ENCODE measurements at regions of chr1 and their contacts with region 1.

Region 1: DNA sequence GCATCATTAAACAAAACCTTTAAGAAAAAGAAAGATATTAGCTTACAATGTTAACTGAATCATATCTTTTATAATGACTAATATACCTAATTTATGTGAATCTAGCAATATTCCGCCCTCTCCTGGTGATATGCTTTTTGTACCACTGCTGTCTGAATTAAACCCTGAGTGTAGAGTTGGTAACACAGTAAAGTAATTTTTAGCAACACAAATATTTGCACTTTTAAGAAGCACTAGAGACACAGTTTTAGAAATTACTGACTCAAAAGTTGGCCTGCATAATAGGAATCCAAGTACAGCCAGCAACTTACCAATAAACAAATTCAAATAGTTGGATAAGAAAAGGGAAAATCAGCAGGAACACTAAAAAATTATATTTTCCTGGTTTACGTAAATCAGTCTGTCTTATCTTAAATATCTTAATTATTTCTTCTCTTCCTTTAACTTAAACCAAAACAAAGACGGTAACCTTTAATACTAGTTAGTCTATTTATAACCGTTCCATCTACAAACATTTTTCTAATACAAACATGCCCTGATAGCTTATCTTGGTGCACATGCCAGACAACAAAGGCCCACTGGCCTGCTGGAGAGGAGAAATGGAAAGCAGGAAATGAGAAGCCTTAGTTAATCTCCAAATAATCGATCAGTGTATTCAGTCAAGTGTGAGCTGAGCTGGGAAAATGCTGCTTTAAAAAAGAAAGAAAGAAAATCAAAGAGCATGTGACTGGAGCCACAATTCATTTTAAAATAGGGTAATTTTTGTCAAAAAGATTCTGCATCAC is 246.0 kb downstream of the RERE start:
- DNase-seq: peak in 1 of 5 donors; percentile 48
- H3K4me3 ChIP-seq: no peak overlapping the region
- H3K27ac ChIP-seq: peak overlapping the region in 1 of 2 donors; percentile 52
- H3K4me1 ChIP-seq: peaks cover 10% of the 10 kb centered on the region
- H3K27me3 ChIP-seq: no peaks in the 10 kb centered on the region
- CTCF ChIP-seq: peak; percentile 38 to 73 (median 71)
- EP300 ChIP-seq: no peak
- POLR2A ChIP-seq: no peak

Region 2: DNA sequence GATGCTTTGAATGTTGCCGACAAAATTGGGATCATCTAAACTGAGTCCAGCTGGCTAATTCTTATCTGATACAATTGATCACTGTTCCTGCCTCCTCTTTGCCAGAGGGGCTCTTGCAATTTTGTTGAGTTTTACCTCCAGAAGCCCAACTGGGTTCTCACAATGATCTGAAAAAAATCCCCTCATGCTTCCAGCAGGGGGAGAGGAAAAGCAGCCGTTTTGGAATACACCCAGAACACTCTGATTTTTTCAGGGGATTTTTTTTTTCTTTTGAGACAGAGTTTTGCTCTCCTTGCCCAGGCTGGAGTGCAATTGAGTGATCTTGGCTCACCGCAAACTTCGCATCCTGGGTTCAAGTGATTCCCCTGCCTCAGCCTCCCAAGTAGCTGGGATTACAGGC is 259.9 kb after region 1 on chr1:
- intact Hi-C with region 1: loop called in 1 of 4 experiments (anchors 10 kb)
- DNase-seq: no peak
- H3K4me3 ChIP-seq: no peak overlapping the region
- H3K27ac ChIP-seq: no peak overlapping the region
- H3K4me1 ChIP-seq: no peaks in the 10 kb centered on the region
- H3K27me3 ChIP-seq: no peaks in the 10 kb centered on the region
- CTCF ChIP-seq: no peak
- EP300 ChIP-seq: no peak
- POLR2A ChIP-seq: no peak